Activated naive CD4-positive, alpha-beta T cell treated with anti-CD3 and anti-CD28 coated beads, Interleukin-2, amount 10 ng/mL, durations not matched to agents 7 days and 5 days (primary cell): ENCODE measurements at regions of chr12 and their contacts with region 1.

Region 1: DNA sequence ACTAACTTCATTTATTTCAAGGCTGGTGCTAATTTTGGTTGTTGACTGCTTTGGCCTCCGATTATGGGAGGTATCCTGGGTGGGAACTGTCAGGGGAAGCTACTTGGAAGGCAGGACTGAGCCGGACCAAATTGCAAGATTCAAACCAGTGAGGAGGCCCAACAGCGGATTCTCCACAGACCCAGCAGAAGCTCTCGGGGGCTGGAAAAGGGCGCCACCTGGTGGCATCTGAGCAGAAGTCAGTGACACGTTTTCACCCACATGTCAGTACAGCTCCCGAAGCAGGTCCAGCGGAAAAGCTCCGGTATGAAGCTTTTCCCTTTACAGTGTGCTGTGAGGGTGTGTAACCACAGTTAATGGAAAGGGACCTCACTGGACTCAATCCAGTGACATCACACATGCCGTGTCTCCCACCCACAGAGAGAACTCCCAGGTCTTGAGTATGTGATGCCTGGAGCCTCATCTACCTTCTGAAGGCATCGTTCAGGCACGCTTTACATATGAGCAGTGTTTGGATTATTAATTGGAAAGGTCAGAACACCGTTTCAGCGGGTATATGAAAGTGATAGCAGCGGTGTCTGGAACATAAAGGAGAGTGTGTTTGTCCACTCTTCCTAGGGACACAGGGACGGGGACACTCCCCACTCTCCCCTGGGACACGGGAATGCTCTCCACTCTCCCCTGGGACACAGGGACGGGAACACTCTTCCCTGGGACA is 3.6 kb upstream of the P2RX2 start:
- DNase-seq: peak; percentile 84
- H3K4me3 Mint-ChIP-seq: no peak overlapping the region
- H3K27ac Mint-ChIP-seq: no peak overlapping the region
- H3K4me1 Mint-ChIP-seq: peaks cover 9% of the 10 kb centered on the region
- H3K27me3 Mint-ChIP-seq: peaks cover 77% of the 10 kb centered on the region

Region 2: DNA sequence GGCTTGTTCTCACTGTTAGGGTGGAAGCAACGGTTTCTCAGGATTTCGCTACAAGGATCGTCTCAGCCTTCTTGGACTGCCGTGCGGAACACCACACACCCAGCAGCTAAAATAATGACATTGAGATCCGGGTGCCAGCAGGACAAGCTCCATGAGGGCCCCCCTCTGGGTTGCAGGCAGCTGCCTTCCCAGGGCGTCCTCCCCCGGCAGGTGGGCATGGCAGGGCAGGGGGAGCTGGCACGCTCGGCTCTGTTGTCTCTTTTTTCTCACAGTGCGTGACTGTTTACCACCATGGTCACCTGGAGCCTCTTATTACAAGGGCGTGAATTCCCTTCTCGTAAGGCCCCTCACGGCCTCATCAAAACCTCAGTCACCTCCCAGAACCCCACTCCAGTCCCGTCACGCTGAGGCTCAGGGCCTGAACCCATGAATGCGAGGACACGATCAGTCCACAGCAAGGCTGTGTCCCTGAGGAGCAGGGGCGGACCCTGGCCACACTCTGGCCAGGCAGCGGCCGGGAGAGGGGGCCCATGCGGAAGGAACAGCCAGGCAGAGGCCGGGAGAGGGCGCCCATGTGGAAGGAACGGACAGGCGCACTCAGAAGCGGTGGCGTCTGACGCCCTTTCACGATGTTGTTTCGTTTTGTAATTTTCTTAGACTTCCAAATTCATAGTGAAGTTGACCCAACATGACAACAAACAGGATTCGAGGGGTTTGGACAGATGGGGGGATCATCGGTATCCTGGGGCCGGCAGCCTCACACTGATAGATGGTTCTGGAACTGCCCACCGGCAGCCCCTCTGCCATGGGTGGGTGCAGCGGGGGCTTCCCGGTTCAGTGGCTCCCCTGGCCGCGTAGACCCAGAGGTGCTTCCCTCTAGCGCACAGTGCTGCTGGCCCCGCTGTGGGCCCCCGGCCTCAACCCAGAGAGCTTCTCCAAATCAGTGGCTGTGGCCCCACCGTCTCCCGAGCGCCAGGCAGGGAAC is 14.7 kb before region 1 on chr12:
- CTCF ChIA-PET with region 1: interaction called, 17 read pairs
- DNase-seq: peak; percentile 63
- H3K4me3 Mint-ChIP-seq: peak overlapping the region; percentile 72
- H3K27ac Mint-ChIP-seq: no peak overlapping the region
- H3K4me1 Mint-ChIP-seq: peaks cover 30% of the 10 kb centered on the region
- H3K27me3 Mint-ChIP-seq: peaks cover 91% of the 10 kb centered on the region